ENCODE measurements at regions of chr7 and their contacts with region 1.

Region 1: GRCh38 chr7:14761510-14762296 is 140.8 kb downstream of the DGKB start:
- DNase-seq: peak; percentile 92
- ATAC-seq: peak; percentile 81
- H3K4me3 ChIP-seq: peak overlapping the region; percentile 32; the same call in 1 of the 2 replicates
- H3K27ac ChIP-seq: peak overlapping the region; percentile 96
- H3K4me1 ChIP-seq: peaks cover 54% of the 10 kb centered on the region
- H3K27me3 ChIP-seq: no peaks in the 10 kb centered on the region
- CTCF ChIP-seq: no peak

Region 2: DNA sequence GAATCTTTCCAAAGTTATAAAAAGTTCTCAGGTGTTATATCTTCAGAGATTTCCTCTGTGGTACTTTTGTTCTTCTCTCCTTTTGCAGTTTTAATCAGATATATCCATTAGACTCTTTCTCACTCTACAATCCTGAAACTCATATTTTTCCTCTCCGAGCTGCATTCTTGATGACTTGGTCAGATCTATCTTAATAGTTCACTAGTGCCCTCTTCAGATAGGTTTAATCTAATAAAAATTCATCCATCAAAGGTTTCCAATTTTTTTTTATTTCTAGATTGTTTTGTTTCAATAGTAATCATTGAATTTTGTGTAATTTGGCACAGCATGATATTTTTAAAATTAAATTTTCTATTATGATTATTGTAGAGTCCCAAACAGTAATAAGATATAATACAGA is 162.7 kb after region 1 on chr7:
- CTCF ChIA-PET with region 1: interaction called, 3 read pairs
- POLR2A ChIA-PET with region 1: no interaction called
- intact Hi-C with region 1: loop called (anchors 5 kb)
- DNase-seq: peak; percentile 62
- ATAC-seq: peak; percentile 67
- H3K4me3 ChIP-seq: peak overlapping the region; percentile 45; the same call in 1 of the 2 replicates
- H3K27ac ChIP-seq: no peak overlapping the region
- H3K4me1 ChIP-seq: peaks cover 5% of the 10 kb centered on the region; the same call in 1 of the 2 replicates
- H3K27me3 ChIP-seq: no peaks in the 10 kb centered on the region
- CTCF ChIP-seq: peak; percentile 61